Right ventricle myocardium superior (tissue), 1 donor: ENCODE measurements at regions of chr1 and their contacts with region 1.

Region 1: GRCh38 chr1:181038399-181038873 is 4.7 kb downstream of the MR1 start:
- DNase-seq: peak; percentile 49
- ATAC-seq: peak; percentile 77

Region 2: GRCh38 chr1:181088079-181089016 is 49.9 kb after region 1 on chr1 and contains the start of gene IER5:
- intact Hi-C with region 1: loop called (anchors 5 kb)
- DNase-seq: peak; percentile 96
- ATAC-seq: peak; percentile 91
- total RNA-seq, gene IER5: 15.1 TPM